Panc1 (cell line): ENCODE measurements at regions of chr11 and their contacts with region 1.

Region 1: GRCh38 chr11:133269267-133269666 is 263.0 kb downstream of the OPCML start:
- DNase-seq: no peak
- ATAC-seq: no peak
- H3K4me3 ChIP-seq: no peak overlapping the region
- H3K27ac ChIP-seq: no peak overlapping the region
- H3K4me1 ChIP-seq: no peaks in the 10 kb centered on the region
- H3K27me3 ChIP-seq: no peaks in the 10 kb centered on the region
- CTCF ChIP-seq: no peak

Region 2: GRCh38 chr11:133243832-133244231 is 25.4 kb before region 1 on chr11:
- CTCF ChIA-PET with region 1: no interaction called
- POLR2A ChIA-PET with region 1: no interaction called
- in situ Hi-C with region 1: no loop called
- intact Hi-C with region 1: no loop called
- DNase-seq: no peak
- ATAC-seq: no peak
- H3K4me3 ChIP-seq: no peak overlapping the region
- H3K27ac ChIP-seq: no peak overlapping the region
- H3K4me1 ChIP-seq: no peaks in the 10 kb centered on the region
- H3K27me3 ChIP-seq: no peaks in the 10 kb centered on the region; the same call in 1 of the 2 replicates
- CTCF ChIP-seq: no peak

Region 3: GRCh38 chr11:133258751-133259150 is 10.5 kb before region 1 on chr11:
- CTCF ChIA-PET with region 1: no interaction called
- POLR2A ChIA-PET with region 1: no interaction called
- in situ Hi-C with region 1: no loop called
- intact Hi-C with region 1: no loop called
- DNase-seq: no peak
- ATAC-seq: no peak
- H3K4me3 ChIP-seq: no peak overlapping the region
- H3K27ac ChIP-seq: no peak overlapping the region
- H3K4me1 ChIP-seq: no peaks in the 10 kb centered on the region
- H3K27me3 ChIP-seq: peaks cover 2% of the 10 kb centered on the region; the same call in 1 of the 2 replicates
- CTCF ChIP-seq: no peak

Region 4: DNA sequence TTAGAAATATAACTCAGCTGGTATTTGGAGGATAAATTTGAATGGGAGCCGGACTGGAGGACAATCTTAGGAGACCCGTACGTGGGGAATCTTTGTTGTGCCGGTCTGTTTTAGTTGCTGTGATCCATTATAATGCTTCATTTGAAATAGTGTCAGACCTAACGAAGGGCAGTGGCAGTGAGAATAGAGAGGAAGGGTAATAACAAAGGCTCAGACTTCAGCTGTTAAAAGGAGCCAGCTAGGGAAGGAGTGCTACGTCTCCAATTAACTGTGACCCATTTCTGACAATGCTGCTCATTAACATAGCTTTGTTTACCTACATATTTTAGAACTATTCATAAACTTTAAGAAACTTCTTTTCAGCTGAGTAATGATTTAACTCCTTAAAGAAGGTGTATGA is 16.1 kb after region 1 on chr11:
- CTCF ChIA-PET with region 1: no interaction called
- POLR2A ChIA-PET with region 1: interaction called, 11 read pairs
- in situ Hi-C with region 1: no loop called
- intact Hi-C with region 1: no loop called
- DNase-seq: no peak
- ATAC-seq: no peak
- H3K4me3 ChIP-seq: no peak overlapping the region
- H3K27ac ChIP-seq: no peak overlapping the region
- H3K4me1 ChIP-seq: no peaks in the 10 kb centered on the region
- H3K27me3 ChIP-seq: no peaks in the 10 kb centered on the region
- CTCF ChIP-seq: no peak

Region 5: DNA sequence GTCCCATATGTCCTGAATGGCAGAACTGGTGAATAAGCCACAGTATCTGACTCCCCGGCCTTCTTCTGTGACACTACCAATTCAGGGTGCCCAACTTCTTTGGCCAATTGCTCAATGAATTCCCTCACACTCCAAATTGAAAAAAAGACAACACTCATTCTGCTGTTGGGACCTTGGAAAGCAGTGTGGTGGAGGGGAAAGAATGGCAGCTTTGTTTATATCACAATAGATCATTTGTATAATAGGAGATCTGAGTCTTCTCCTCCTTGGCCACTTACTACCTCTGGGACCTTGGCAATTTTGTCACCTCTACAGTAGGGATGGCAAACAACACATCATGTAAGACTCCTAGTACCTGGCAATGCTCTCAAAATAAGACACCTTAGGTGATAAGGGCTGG is 198.4 kb after region 1 on chr11:
- CTCF ChIA-PET with region 1: no interaction called
- POLR2A ChIA-PET with region 1: no interaction called
- in situ Hi-C with region 1: no loop called
- intact Hi-C with region 1: no loop called
- DNase-seq: no peak
- ATAC-seq: no peak
- H3K4me3 ChIP-seq: no peak overlapping the region
- H3K27ac ChIP-seq: no peak overlapping the region
- H3K4me1 ChIP-seq: no peaks in the 10 kb centered on the region
- H3K27me3 ChIP-seq: no peaks in the 10 kb centered on the region
- CTCF ChIP-seq: no peak